CD8-positive, alpha-beta T cell (primary cell): ENCODE measurements at regions of chr1 and their contacts with region 1.

Region 1: GRCh38 chr1:45359882-45360513 is 19.8 kb upstream of the MUTYH start:
- DNase-seq: peak in 7 of 9 experiments; percentile 16 to 70 (median 47)
- ATAC-seq: peak; percentile 55
- H3K4me3 ChIP-seq: no peak overlapping the region
- H3K4me3 Mint-ChIP-seq: no peak overlapping the region
- H3K27ac ChIP-seq: no peak overlapping the region
- H3K27ac Mint-ChIP-seq: no peak overlapping the region
- H3K4me1 ChIP-seq: no peaks in the 10 kb centered on the region
- H3K4me1 Mint-ChIP-seq: peaks cover 6% of the 10 kb centered on the region
- H3K27me3 ChIP-seq: no peaks in the 10 kb centered on the region
- H3K27me3 Mint-ChIP-seq: no peaks in the 10 kb centered on the region
- CTCF ChIP-seq: peak; percentile 55

Region 2: DNA sequence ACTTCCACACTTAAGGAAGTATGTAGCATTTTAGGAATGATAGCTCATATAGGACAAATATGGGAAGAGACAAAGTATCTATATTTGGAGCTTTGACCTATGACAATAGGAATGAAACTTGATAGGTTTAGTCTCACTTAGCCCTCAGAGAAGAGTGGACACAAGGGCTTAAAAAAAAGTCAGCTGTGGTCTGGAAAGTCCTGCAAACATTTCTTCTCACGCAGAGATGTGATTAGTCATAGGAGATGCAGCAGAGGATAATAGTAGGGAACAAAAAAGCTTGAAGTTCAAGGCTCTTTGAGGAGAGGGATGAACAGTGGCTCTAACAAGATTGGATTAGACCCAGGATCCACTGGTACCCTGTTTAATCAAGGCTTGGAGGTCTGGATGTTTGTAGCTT is 969.7 kb before region 1 on chr1:
- CTCF ChIA-PET with region 1: no interaction called
- POLR2A ChIA-PET with region 1: no interaction called
- intact Hi-C with region 1: no loop called
- DNase-seq: no peak
- ATAC-seq: no peak
- H3K4me3 ChIP-seq: no peak overlapping the region
- H3K4me3 Mint-ChIP-seq: no peak overlapping the region
- H3K27ac ChIP-seq: no peak overlapping the region
- H3K27ac Mint-ChIP-seq: no peak overlapping the region
- H3K4me1 ChIP-seq: no peaks in the 10 kb centered on the region
- H3K4me1 Mint-ChIP-seq: no peaks in the 10 kb centered on the region
- H3K27me3 ChIP-seq: peaks cover 0 to 3% of the 10 kb centered on the region in 2 experiments
- H3K27me3 Mint-ChIP-seq: peaks cover 20% of the 10 kb centered on the region
- CTCF ChIP-seq: no peak

Region 3: GRCh38 chr1:44994309-44994898 is 365.6 kb before region 1 on chr1:
- CTCF ChIA-PET with region 1: no interaction called
- POLR2A ChIA-PET with region 1: no interaction called
- intact Hi-C with region 1: no loop called
- DNase-seq: no peak
- ATAC-seq: no peak
- H3K4me3 ChIP-seq: no peak overlapping the region
- H3K4me3 Mint-ChIP-seq: no peak overlapping the region
- H3K27ac ChIP-seq: no peak overlapping the region
- H3K27ac Mint-ChIP-seq: no peak overlapping the region
- H3K4me1 ChIP-seq: no peaks in the 10 kb centered on the region
- H3K4me1 Mint-ChIP-seq: no peaks in the 10 kb centered on the region
- H3K27me3 ChIP-seq: no peaks in the 10 kb centered on the region
- H3K27me3 Mint-ChIP-seq: no peaks in the 10 kb centered on the region
- CTCF ChIP-seq: no peak

Region 4: GRCh38 chr1:45348716-45349677 is 11.0 kb before region 1 on chr1:
- CTCF ChIA-PET with region 1: interaction called, 10 read pairs
- POLR2A ChIA-PET with region 1: no interaction called
- intact Hi-C with region 1: no loop called
- DNase-seq: no peak
- ATAC-seq: no peak
- H3K4me3 ChIP-seq: no peak overlapping the region
- H3K4me3 Mint-ChIP-seq: no peak overlapping the region
- H3K27ac ChIP-seq: no peak overlapping the region
- H3K27ac Mint-ChIP-seq: no peak overlapping the region
- H3K4me1 ChIP-seq: no peaks in the 10 kb centered on the region
- H3K4me1 Mint-ChIP-seq: peaks cover 3% of the 10 kb centered on the region
- H3K27me3 ChIP-seq: no peaks in the 10 kb centered on the region
- H3K27me3 Mint-ChIP-seq: no peaks in the 10 kb centered on the region
- CTCF ChIP-seq: no peak